AG04449 (cell line): ENCODE measurements at regions of chr5 and their contacts with region 1.

Region 1: GRCh38 chr5:172454358-172455086 is at the start of gene SH3PXD2B:
- DNase-seq: no peak
- H3K4me3 ChIP-seq: peak within 1 kb of the TSS; percentile 85
- CTCF ChIP-seq: no peak

Region 2: GRCh38 chr5:172361566-172362238 is 92.8 kb before region 1 on chr5:
- CTCF ChIA-PET with region 1: interaction called, 12 read pairs
- POLR2A ChIA-PET with region 1: no interaction called
- DNase-seq: peak; percentile 99
- H3K4me3 ChIP-seq: no peak overlapping the region
- CTCF ChIP-seq: no peak

Region 3: DNA sequence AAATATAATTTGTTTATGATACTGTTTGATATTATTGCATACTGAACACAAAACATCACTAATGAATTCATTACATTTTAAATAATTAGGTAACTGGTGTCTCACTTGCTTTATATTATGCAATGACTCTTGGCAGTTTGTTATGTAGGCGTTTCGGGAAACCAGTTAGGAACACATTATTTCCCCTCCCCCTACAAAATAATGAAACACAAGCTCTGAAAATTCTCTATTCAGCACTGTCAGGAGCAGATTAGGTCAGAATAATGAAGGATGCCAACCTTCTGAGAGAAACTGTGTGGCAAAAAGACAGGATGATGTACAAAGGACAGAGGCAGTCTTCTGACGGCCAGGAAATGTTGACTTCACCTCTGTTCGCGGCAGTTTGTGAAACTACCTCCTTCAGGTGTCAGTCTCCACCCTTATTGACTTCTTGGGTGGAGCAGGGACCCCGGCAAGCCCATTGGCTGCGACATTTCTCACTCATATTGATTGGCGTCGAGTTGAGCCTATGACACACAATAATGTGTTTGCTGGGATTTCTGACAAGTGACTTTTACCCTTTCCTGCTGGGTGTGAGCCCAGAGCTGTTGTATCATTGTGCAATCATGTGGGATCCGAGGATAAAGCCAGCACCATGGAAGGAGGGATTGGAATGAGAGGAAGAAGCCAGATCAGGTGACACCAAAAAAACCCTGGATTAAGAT is 34.1 kb before region 1 on chr5:
- CTCF ChIA-PET with region 1: interaction called, 63 read pairs
- POLR2A ChIA-PET with region 1: no interaction called
- DNase-seq: peak; percentile 76
- H3K4me3 ChIP-seq: no peak overlapping the region
- CTCF ChIP-seq: no peak

Region 4: GRCh38 chr5:172443441-172444109 is 10.9 kb before region 1 on chr5:
- CTCF ChIA-PET with region 1: interaction called, 112 read pairs
- POLR2A ChIA-PET with region 1: interaction called, 6 read pairs
- DNase-seq: peak; percentile 74
- H3K4me3 ChIP-seq: no peak overlapping the region
- CTCF ChIP-seq: no peak

Region 5: GRCh38 chr5:172688349-172689217 is 234.1 kb after region 1 on chr5:
- CTCF ChIA-PET with region 1: interaction called, 10 read pairs
- POLR2A ChIA-PET with region 1: no interaction called
- DNase-seq: no peak
- H3K4me3 ChIP-seq: no peak overlapping the region
- CTCF ChIP-seq: no peak